CD4-positive, alpha-beta memory T cell (primary cell): ENCODE measurements at regions of chr17 and their contacts with region 1.

Region 1: GRCh38 chr17:49343273-49343672 is 18.8 kb downstream of the ZNF652 start:
- DNase-seq: peak; percentile 19 to 56 (median 23)
- H3K4me3 ChIP-seq: peak overlapping the region in 1 of 2 donors; percentile 24
- H3K4me3 Mint-ChIP-seq: peak overlapping the region; percentile 57 to 85 (median 82)
- H3K27ac ChIP-seq: peak overlapping the region; percentile 48
- H3K27ac Mint-ChIP-seq: peak overlapping the region; percentile 32 to 95 (median 85)
- H3K4me1 ChIP-seq: peaks cover 83% of the 10 kb centered on the region
- H3K4me1 Mint-ChIP-seq: peaks cover 36 to 81% (median 61%) of the 10 kb centered on the region in 4 donors
- H3K27me3 ChIP-seq: no peaks in the 10 kb centered on the region
- H3K27me3 Mint-ChIP-seq: no peaks in the 10 kb centered on the region

Region 2: DNA sequence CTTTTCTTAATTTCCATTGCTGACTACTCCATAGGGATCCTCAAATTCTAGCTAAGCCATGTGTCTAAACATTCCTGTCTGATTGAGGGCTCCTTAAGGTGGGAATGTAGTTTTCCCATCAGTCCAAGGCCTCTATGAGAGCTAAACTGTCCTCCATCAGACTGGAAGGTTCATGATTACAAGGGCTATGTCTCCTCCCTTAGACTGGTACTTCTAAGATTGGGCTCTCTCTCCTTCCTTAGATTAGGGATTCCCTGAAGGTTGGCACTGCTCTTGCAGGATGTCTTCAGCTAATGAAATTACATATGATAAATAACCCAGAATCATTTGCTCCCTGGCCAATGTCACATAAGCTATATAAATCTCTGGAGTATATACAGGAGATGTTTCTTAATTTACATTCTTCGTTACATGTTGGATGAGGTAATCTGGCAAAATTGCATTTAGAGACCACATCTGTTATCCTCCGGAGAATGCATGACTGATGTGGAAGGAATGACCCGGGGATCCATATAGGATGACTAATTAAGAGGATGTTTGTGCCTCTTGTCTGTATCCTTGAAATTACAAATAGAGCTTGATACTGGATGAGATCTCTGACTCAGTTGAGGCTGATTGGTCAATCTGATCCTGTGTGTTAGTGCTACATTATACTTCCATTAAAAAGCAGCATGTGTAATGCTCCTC is 196.5 kb before region 1 on chr17:
- CTCF ChIA-PET with region 1: no interaction called
- POLR2A ChIA-PET with region 1: no interaction called
- intact Hi-C with region 1: no loop called
- DNase-seq: no peak
- H3K4me3 ChIP-seq: no peak overlapping the region
- H3K4me3 Mint-ChIP-seq: no peak overlapping the region
- H3K27ac ChIP-seq: no peak overlapping the region
- H3K27ac Mint-ChIP-seq: no peak overlapping the region
- H3K4me1 ChIP-seq: no peaks in the 10 kb centered on the region
- H3K4me1 Mint-ChIP-seq: no peaks in the 10 kb centered on the region
- H3K27me3 ChIP-seq: no peaks in the 10 kb centered on the region
- H3K27me3 Mint-ChIP-seq: peaks cover 17 to 19% of the 10 kb centered on the region in 2 donors

Region 3: GRCh38 chr17:49327835-49328784 is 15.2 kb before region 1 on chr17:
- CTCF ChIA-PET with region 1: interaction called, 13 read pairs
- POLR2A ChIA-PET with region 1: interaction called, 13 read pairs
- intact Hi-C with region 1: no loop called
- DNase-seq: no peak
- H3K4me3 ChIP-seq: no peak overlapping the region
- H3K4me3 Mint-ChIP-seq: peak overlapping the region in 4 of 8 donors; percentile 4 to 35 (median 20)
- H3K27ac ChIP-seq: no peak overlapping the region
- H3K27ac Mint-ChIP-seq: peak overlapping the region; percentile 10 to 90 (median 60)
- H3K4me1 ChIP-seq: peaks cover 26% of the 10 kb centered on the region
- H3K4me1 Mint-ChIP-seq: peaks cover 37 to 63% (median 51%) of the 10 kb centered on the region in 4 donors
- H3K27me3 ChIP-seq: no peaks in the 10 kb centered on the region
- H3K27me3 Mint-ChIP-seq: no peaks in the 10 kb centered on the region

Region 4: GRCh38 chr17:49361902-49362722 is 18.8 kb after region 1 on chr17 and contains the start of gene ZNF652:
- CTCF ChIA-PET with region 1: interaction called, 69 read pairs
- POLR2A ChIA-PET with region 1: interaction called, 197 read pairs
- intact Hi-C with region 1: loop called (anchors 1 kb)
- DNase-seq: peak; percentile 96 to 98 (median 97)
- H3K4me3 ChIP-seq: peak within 1 kb of the TSS; percentile 48 to 61
- H3K4me3 Mint-ChIP-seq: peak within 1 kb of the TSS; percentile 91 to 98 (median 94)
- H3K27ac ChIP-seq: peak within 1 kb of the TSS; percentile 66
- H3K27ac Mint-ChIP-seq: peak within 1 kb of the TSS; percentile 91 to 98 (median 96)
- H3K4me1 ChIP-seq: peaks cover 62% of the 10 kb centered on the region
- H3K4me1 Mint-ChIP-seq: peaks cover 43 to 64% (median 57%) of the 10 kb centered on the region in 4 donors
- H3K27me3 ChIP-seq: no peaks in the 10 kb centered on the region
- H3K27me3 Mint-ChIP-seq: no peaks in the 10 kb centered on the region
- total RNA-seq, gene ZNF652: 64.2 to 68.6 TPM